Heart right ventricle (tissue), 16 donors: ENCODE measurements at regions of chr1 and their contacts with region 1.

Region 1: DNA sequence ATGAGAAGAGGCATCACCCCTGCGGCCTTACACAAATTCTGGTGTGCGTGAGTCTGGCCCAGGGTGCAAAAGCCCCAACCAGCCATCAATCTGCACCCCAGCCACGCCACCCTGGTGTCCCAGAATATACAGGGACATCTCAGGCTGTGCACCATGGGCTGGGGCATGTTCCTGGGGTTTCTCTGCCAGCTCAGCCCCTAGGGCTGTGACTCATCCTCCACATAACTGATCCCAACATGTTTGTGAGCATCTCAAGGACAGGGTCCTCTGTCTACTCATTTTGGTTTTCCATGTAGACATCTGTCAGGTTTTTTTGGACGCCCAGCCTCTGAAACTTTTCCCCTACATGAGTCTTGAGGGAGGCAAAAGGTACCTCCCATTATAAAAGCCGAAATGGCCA is 511 bp downstream of the ZNF683 start:
- DNase-seq: no peak
- ATAC-seq: no peak
- H3K4me3 ChIP-seq: no peak overlapping the region
- H3K27ac ChIP-seq: no peak overlapping the region
- H3K4me1 ChIP-seq: peaks cover 0 to 36% (median 0%) of the 10 kb centered on the region in 9 donors
- H3K27me3 ChIP-seq: peaks cover 0 to 41% (median 16%) of the 10 kb centered on the region in 7 donors
- CTCF ChIP-seq: no peak

Region 2: DNA sequence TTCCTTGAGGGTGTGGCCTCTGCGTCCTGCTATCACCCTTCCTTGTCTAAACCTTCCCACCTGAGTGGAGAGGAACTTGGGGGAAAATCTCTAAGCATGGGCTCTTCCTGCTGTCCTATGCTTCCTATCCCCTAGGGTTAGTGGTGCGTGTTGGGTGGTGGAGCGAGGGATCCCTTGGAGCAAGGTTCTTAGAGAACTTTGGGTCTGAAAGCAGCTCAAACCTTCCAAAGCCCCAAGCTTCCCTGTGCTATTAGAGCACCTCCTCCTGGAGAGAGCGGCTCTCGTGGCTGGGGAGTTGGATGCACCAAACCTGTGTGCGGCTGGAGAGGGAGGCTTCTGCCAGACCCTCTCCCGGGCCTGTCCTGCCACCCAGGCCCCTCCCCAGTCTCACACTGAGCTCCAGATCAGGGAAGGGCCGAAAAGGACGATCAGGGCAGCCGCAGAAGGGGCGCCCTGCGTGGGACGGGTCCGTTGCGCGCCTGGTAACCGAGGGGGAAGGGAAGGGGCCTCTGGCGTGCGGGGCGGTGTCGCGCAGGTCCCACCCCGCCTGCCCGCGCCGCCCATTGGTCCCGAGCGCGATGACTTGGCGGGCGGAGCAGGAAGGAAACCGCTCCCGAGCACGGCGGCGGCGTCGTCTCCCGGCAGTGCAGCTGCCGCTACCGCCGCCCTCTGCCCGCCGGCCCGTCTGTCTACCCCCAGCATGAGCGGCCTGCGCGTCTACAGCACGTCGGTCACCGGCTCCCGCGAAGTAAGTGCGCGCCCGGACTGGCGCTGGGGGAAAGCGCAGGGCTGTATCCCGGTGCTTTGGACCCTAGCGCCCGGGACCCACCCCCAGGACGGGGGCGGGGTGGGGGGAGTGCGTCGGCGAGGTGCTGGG is 92.3 kb before region 1 on chr1 and contains the start of gene SH3BGRL3:
- intact Hi-C with region 1: loop called in 1 of 10 experiments (anchors 5 kb)
- DNase-seq: peak; percentile 88 to 90
- ATAC-seq: peak; percentile 72 to 90 (median 86)
- H3K4me3 ChIP-seq: peak within 1 kb of the TSS; percentile 58 to 99 (median 82)
- H3K27ac ChIP-seq: peak within 1 kb of the TSS; percentile 86 to 100 (median 95)
- H3K4me1 ChIP-seq: peaks cover 24 to 99% (median 74%) of the 10 kb centered on the region in 9 donors
- H3K27me3 ChIP-seq: no peaks in the 10 kb centered on the region
- CTCF ChIP-seq: peak in 6 of 9 donors; percentile 26 to 67 (median 48)
- total RNA-seq, gene SH3BGRL3: 18.4 to 116 (median 25.2) TPM